Vagina (tissue), 2 donors: ENCODE measurements at regions of chr3 and their contacts with region 1.

Region 1: DNA sequence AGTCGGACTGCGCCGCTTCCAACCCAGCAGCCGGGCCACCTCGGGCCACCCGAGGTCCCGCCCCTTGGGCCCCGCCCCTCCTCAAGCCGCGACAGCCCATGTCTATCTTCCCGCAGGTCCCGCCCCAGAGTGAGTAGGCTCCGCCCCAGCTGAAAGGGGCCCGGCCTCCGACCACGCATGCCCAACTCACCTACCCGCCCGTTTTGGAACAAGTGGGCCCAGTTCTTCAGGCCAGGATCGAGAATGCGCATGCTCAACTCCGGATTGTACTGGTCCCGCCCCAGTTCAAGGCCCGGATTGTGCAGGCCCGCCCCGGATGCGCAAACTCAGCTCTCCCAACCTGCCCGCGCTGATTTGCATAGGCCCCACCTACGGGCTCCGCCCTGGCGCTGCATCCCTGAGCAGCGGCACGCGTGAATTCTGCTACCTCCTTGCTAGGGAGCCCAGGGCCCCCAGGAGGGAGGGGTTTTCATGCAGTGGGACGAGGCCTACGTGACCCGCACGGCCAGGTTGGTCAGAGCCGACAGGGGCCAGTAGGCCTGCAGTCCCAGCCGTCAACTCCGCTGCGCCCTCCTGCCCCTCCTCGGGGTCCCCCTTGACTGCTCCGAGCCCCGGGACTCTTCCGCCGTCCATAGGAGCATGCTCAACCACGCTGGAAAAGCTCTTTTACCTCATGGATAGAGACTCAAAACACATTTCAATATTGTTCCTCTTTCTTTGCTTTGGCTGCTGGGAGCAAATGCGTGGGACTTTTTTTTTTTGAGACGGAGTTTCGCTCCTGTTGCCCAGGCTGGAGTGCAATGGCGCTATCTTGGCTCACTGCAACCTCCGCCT is at the start of gene PFKFB4:
- DNase-seq: peak; percentile 99
- H3K4me3 ChIP-seq: peak within 1 kb of the TSS; percentile 58 to 60
- H3K27ac ChIP-seq: peak within 1 kb of the TSS; percentile 83
- H3K4me1 ChIP-seq: peaks cover 47% of the 10 kb centered on the region
- H3K27me3 ChIP-seq: no peaks in the 10 kb centered on the region
- CTCF ChIP-seq: no peak
- POLR2A ChIP-seq: no peak
- total RNA-seq, gene PFKFB4: 7.4 TPM

Region 2: DNA sequence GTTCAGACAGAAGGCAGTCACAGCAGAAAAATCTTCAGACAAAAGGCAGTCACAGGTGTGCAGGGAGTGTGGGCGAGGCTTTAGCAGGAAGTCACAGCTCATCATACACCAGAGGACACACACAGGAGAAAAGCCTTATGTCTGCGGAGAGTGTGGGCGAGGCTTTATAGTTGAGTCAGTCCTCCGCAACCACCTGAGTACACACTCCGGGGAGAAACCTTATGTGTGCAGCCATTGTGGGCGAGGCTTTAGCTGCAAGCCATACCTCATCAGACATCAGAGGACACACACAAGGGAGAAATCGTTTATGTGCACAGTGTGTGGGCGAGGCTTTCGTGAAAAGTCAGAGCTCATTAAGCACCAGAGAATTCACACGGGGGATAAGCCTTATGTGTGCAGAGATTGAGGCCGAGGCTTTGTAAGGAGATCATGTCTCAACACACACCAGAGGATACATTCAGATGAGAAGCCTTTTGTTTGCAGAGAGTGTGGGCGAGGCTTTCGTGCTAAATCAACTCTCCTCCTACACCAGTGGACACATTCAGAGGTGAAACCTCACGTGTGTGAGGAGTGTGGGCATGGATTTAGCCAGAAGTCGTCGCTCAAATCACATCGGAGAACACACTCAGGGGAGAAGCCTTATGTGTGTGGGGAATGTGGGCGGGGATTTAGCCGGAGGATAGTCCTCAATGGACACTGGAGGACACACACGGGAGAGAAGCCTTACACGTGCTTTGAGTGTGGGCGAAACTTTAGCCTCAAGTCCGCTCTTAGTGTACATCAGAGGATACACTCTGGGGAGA is 288.4 kb before region 1 on chr3:
- intact Hi-C with region 1: loop called (anchors 10 kb)
- DNase-seq: peak in 1 of 2 donors; percentile 89
- H3K4me3 ChIP-seq: no peak overlapping the region
- H3K27ac ChIP-seq: peak overlapping the region; percentile 53
- H3K4me1 ChIP-seq: peaks cover 31% of the 10 kb centered on the region
- H3K27me3 ChIP-seq: no peaks in the 10 kb centered on the region
- CTCF ChIP-seq: no peak
- POLR2A ChIP-seq: no peak

Region 3: DNA sequence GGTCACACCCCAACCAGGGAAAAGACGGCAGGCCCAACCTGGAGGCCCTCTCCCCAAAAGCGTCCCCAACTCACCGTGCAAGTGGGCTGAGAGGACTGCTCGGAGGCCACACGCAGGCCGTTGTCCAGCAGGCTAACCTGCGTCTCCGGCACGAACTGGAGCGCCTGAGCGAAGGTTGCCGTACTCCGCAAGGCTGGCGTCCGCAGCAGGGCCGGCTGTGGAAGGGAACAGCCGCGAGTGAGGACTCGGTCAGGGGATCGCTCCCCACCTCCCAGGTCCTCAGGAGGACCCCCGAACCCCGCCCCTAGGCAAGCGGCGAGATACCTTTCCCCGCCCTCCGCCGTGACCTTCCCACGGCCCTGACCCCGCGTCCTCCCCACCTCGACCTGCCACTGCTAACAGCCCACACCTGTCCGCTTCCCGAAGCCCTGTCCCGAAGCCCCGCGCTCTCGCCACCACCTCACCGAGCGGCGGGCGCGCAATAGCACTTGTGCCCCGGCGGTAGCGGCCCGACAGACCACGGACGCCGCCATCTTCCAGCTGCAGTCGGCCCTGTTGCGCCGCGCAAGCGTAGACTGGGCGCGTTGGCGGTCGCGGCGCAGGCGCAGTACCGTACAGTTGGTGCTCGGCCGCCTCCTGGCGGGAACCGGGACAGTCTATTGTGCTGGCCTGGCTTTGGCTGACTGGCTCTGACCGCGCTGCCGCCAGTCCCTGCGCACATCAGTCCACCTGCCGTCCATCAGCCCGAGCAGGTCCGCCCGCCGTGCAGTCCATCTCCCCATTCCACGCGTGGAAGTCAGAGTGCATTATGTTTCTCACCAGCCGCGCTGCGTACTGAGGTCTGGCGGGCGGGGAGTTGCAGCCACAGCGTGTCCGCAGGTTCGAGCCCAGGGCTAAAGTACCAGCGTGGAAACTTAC is 52.3 kb after region 1 on chr3 and contains the start of gene UQCRC1:
- intact Hi-C with region 1: no loop called
- DNase-seq: no peak
- H3K4me3 ChIP-seq: peak within 1 kb of the TSS; percentile 96 to 97
- H3K27ac ChIP-seq: peak within 1 kb of the TSS; percentile 91
- H3K4me1 ChIP-seq: peaks cover 34% of the 10 kb centered on the region
- H3K27me3 ChIP-seq: no peaks in the 10 kb centered on the region
- CTCF ChIP-seq: peak; percentile 50 to 91 (median 88)
- POLR2A ChIP-seq: peak in 1 of 2 donors; percentile 55
- total RNA-seq, gene UQCRC1: 190 TPM